Naive thymus-derived CD8-positive, alpha-beta T cell (primary cell): ENCODE measurements at regions of chr9 and their contacts with region 1.

Region 1: DNA sequence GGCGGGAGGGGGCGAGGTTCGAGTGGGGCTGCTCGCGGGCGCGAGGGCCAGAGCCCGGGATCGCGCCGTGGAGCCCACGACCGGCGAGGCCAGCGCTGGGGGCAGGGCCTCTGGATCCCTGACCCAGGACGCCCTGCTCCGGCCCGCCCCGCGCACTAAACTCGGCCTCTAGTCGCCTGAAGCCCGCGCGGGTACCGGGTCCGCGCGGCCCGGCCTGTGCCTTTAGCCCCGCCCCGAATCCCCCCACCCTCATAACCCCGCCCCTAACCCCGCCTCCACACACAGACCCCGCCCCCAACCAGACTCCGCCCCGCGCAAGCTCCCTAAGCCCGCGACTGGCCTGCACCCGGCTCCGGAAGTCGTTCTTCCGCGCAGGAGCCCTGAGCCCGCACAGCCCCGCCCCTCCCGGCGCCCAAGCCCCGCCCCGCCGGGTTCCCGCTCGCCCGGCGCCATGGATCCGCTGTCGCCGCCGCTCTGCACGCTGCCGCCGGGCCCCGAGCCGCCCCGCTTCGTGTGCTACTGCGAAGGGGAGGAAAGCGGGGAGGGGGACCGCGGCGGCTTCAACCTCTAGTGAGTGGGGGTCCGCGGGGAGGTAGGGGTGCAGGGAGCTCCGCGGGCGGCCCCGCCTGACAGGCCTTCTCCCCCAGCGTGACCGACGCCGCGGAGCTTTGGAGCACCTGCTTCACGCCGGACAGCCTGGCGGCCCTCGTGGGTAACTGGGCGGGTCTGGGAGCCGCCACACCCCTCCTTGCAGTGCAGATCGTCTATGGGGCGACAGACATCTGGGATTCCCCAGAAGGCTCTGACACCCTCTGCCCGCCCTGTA is at the start of gene PAXX:
- DNase-seq: peak; percentile 86 to 97 (median 92)
- ATAC-seq: peak; percentile 80 to 83
- H3K4me3 Mint-ChIP-seq: peak within 1 kb of the TSS; percentile 84 to 93 (median 88)
- H3K27ac Mint-ChIP-seq: peak within 1 kb of the TSS; percentile 78 to 96 (median 92)
- H3K4me1 Mint-ChIP-seq: peaks cover 7 to 42% (median 34%) of the 10 kb centered on the region in 4 donors
- H3K27me3 Mint-ChIP-seq: peaks cover 0 to 7% (median 0%) of the 10 kb centered on the region in 5 donors
- polyA plus RNA-seq, gene PAXX: 104 to 119 (median 112) TPM

Region 2: GRCh38 chr9:136799854-136800657 is 192.2 kb before region 1 on chr9:
- POLR2A ChIA-PET with region 1: interaction called, 10 read pairs
- DNase-seq: peak; percentile 63 to 97 (median 85)
- ATAC-seq: peak; percentile 73 to 74
- H3K4me3 Mint-ChIP-seq: peak overlapping the region; percentile 79 to 93 (median 90)
- H3K27ac Mint-ChIP-seq: peak overlapping the region in 7 of 10 donors; percentile 78 to 91 (median 83)
- H3K4me1 Mint-ChIP-seq: peaks cover 14 to 46% (median 34%) of the 10 kb centered on the region in 4 donors
- H3K27me3 Mint-ChIP-seq: peaks cover 0 to 2% (median 0%) of the 10 kb centered on the region in 5 donors

Region 3: DNA sequence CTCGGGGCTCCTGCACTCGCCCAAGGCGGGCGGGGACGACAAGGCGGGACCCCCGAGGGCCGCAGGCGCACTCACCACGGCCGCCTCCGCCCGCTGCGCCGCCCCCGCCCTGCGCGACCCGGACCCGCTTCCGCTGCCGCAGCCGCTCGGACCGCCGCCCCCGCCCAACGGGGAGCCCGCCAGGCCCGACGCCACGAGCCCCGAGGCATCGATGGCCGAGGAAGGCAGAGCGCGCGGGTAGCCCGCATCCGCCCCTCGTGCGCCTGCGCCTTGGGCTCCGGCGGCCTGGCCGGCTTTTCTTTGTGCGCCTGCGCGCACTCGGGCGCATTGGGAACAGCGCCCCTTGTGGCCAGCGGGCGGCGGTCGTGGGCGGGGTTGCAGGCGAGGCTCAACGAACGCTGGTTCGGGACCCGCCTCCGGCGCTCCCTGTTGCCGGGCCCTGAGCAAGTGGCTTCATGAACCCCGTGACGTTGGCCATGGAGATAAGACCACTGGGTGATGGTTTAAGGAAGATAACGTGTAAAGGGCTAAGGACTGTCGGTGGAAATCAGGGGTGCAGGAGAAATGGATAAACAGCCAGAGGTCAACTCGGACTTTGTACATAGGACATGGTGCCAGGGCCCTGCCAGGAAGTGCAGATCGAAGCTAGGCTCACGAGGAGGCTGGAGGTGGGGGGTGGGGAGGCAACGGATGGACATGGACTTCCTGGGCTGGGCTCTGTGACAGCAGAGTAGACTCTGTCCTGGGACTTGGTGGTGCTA is 47.5 kb before region 1 on chr9 and contains the starts of genes C8G and FBXW5:
- POLR2A ChIA-PET with region 1: interaction called, 113 read pairs
- DNase-seq: peak; percentile 88 to 96 (median 94)
- ATAC-seq: peak; percentile 77 to 87
- H3K4me3 Mint-ChIP-seq: peak within 1 kb of the TSS; percentile 72 to 92 (median 82)
- H3K27ac Mint-ChIP-seq: peak within 1 kb of the TSS in 9 of 10 donors; percentile 74 to 95 (median 77)
- H3K4me1 Mint-ChIP-seq: peaks cover 5 to 32% (median 14%) of the 10 kb centered on the region in 4 donors
- H3K27me3 Mint-ChIP-seq: no peaks in the 10 kb centered on the region
- polyA plus RNA-seq, gene C8G: 1.6 TPM in 1 of 3 donors, not detected in the others
- polyA plus RNA-seq, gene FBXW5: 62.9 to 92.1 (median 83.7) TPM

Region 4: GRCh38 chr9:136978073-136978864 is 13.9 kb before region 1 on chr9:
- POLR2A ChIA-PET with region 1: interaction called, 45 read pairs
- DNase-seq: peak; percentile 62 to 86 (median 70)
- ATAC-seq: peak; percentile 63 to 68
- H3K4me3 Mint-ChIP-seq: peak overlapping the region in 3 of 10 donors; percentile 45 to 75 (median 68)
- H3K27ac Mint-ChIP-seq: no peak overlapping the region
- H3K4me1 Mint-ChIP-seq: peaks cover 7 to 29% (median 23%) of the 10 kb centered on the region in 4 donors
- H3K27me3 Mint-ChIP-seq: peaks cover 0 to 9% (median 0%) of the 10 kb centered on the region in 5 donors

Region 5: GRCh38 chr9:137016436-137016835 is 24.2 kb after region 1 on chr9:
- POLR2A ChIA-PET with region 1: no interaction called
- DNase-seq: no peak
- ATAC-seq: no peak
- H3K4me3 Mint-ChIP-seq: no peak overlapping the region
- H3K27ac Mint-ChIP-seq: peak overlapping the region in 1 of 10 donors; percentile 5
- H3K4me1 Mint-ChIP-seq: peaks cover 0 to 6% (median 2%) of the 10 kb centered on the region in 4 donors
- H3K27me3 Mint-ChIP-seq: no peaks in the 10 kb centered on the region

Region 6: DNA sequence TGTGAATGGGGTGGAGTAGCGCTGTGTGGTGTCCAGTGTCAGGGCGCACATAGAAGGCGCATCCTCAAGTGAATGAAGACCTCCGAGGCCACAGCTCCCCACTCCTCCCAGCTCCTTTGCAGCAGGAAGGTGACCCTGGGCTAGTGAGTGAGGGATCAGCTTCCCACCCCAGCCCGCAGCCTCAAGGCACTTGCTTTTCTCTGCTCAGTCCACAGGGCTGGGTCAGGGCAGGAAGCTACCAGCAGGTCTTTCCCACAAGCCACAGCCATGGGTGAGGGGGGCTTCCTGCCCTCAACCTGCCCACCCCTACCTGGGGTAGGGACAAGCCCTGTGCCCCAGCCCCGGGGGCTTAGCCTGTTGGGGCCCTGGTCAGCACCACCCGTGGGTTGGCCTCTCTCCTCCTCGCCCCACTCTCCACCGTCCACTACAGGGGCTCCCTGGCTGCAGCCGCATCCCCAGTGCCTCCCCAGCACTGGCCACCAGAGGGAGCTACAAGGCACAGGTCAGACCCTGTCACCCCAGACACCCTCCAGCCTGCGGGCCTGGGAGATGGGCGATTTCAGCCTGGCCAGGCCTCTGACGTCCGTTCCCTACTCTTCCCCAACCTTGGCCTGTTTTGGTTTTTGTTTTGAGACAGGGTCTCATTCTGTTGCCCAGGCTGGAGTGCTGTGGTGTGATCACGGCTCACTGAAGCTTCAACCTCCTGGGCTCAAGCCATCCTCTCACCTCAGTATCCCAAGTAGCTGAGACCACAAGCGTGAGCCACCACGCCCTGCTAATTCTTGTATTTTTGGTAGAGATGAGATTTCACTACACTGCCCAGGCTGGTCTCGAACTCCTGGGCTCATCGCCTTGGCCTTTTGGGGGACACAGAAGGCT is 37.1 kb after region 1 on chr9:
- POLR2A ChIA-PET with region 1: interaction called, 16 read pairs
- DNase-seq: peak; percentile 29 to 76 (median 62)
- ATAC-seq: peak; percentile 15 to 29
- H3K4me3 Mint-ChIP-seq: peak overlapping the region; percentile 75 to 88 (median 83)
- H3K27ac Mint-ChIP-seq: peak overlapping the region; percentile 56 to 88 (median 72)
- H3K4me1 Mint-ChIP-seq: peaks cover 16 to 68% (median 61%) of the 10 kb centered on the region in 4 donors
- H3K27me3 Mint-ChIP-seq: no peaks in the 10 kb centered on the region

Region 7: DNA sequence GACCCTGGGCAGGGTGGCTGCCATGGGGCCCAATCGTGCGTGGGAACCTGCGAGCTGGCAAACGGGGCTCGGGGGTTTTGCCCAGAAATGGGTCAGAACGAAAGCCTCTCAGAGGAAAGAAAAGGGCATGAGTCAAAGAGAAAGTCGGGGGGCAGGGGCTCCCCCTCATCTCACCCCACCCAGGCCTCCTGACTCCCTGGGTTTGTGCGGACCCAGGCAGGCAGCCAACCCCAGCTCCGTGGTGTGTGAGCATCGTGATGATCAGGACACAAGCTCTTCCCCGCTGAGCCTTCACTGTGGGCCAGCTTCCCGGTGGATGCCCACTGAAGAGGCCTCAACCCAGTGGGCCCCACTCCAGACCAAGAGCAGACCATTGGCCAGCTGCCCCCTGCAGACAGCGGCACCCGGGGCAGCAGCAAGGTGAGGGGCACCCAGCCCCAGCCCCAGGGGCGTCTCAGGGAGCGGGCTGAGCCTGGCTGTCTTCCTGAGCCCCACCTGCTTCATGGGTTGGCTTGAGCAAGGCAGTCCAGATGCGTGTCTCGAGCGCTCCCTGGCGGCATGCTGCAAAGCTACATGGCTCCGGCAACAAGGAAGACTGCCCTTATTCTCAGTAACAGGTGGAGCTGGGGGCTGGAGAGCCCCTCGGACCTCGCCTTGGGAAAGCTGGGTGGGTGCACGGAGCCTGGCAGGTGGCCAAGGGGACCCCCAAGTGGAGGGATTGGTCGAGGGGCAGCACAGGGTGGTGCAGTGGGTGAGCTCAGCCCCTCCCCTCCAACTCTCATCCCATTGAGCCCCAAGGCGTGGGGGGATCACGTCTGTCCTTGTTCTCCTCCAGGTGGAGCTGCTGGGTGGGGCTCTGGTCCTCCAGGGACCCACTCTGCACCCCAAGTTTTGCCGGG is 42.9 kb after region 1 on chr9:
- POLR2A ChIA-PET with region 1: interaction called, 16 read pairs
- DNase-seq: peak; percentile 77 to 93 (median 86)
- ATAC-seq: peak; percentile 84 to 89
- H3K4me3 Mint-ChIP-seq: peak overlapping the region; percentile 65 to 89 (median 78)
- H3K27ac Mint-ChIP-seq: peak overlapping the region; percentile 19 to 88 (median 74)
- H3K4me1 Mint-ChIP-seq: peaks cover 19 to 50% (median 43%) of the 10 kb centered on the region in 4 donors
- H3K27me3 Mint-ChIP-seq: peaks cover 0 to 2% (median 0%) of the 10 kb centered on the region in 5 donors

Region 8: GRCh38 chr9:137217276-137218211 is 225.3 kb after region 1 on chr9:
- POLR2A ChIA-PET with region 1: no interaction called
- DNase-seq: no peak
- ATAC-seq: no peak
- H3K4me3 Mint-ChIP-seq: peak overlapping the region in 3 of 10 donors; percentile 15 to 36 (median 33)
- H3K27ac Mint-ChIP-seq: peak overlapping the region in 1 of 10 donors; percentile 15
- H3K4me1 Mint-ChIP-seq: peaks cover 0 to 3% (median 0%) of the 10 kb centered on the region in 4 donors
- H3K27me3 Mint-ChIP-seq: no peaks in the 10 kb centered on the region